ENCODE measurements at regions of chr14 and their contacts with region 1.

Region 1: DNA sequence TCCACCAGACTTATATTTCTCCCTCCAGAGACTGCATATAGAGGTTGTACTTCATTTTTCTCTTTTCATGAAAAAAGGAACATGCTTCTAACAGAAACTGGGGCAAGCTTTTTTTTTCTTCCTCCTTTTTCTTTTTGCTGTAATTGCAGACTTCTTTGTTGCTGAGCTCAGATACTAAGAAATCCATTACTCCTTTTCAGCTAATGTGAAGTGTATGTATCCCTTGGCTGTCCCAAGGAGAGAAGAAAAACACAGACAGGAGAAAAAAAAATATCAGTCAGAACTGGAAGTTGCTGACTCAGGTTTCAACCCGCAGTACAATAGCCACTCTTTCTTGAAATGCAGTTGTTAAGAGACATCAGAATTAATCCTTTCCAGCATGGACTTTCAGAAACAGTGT is 1248.4 kb downstream of the LRFN5 start:
- H3K4me3 Mint-ChIP-seq: peak overlapping the region; percentile 17
- H3K27ac Mint-ChIP-seq: peak overlapping the region; percentile 87
- H3K4me1 Mint-ChIP-seq: peaks cover 19% of the 10 kb centered on the region
- H3K27me3 Mint-ChIP-seq: no peaks in the 10 kb centered on the region

Region 2: DNA sequence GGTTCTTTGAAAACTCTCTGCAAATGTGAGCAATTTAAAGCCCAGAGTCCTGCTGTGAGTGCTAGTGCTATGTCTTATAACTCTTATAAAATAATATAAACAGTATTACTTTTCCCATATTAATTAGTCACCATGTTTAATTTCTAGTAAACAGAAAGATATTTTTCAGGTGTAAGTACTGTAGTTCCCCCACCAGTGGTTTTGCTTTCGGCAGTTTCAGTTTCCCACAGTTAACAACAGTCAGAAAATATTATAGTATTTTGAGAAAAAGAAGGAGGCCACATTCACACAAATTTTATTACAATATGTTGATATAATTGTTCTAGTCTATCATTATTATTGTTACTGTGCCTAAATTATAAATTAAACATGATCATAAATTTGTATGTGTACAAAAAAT is 447.9 kb before region 1 on chr14:
- intact Hi-C with region 1: no loop called
- H3K4me3 Mint-ChIP-seq: no peak overlapping the region
- H3K27ac Mint-ChIP-seq: no peak overlapping the region
- H3K4me1 Mint-ChIP-seq: no peaks in the 10 kb centered on the region
- H3K27me3 Mint-ChIP-seq: no peaks in the 10 kb centered on the region

Region 3: DNA sequence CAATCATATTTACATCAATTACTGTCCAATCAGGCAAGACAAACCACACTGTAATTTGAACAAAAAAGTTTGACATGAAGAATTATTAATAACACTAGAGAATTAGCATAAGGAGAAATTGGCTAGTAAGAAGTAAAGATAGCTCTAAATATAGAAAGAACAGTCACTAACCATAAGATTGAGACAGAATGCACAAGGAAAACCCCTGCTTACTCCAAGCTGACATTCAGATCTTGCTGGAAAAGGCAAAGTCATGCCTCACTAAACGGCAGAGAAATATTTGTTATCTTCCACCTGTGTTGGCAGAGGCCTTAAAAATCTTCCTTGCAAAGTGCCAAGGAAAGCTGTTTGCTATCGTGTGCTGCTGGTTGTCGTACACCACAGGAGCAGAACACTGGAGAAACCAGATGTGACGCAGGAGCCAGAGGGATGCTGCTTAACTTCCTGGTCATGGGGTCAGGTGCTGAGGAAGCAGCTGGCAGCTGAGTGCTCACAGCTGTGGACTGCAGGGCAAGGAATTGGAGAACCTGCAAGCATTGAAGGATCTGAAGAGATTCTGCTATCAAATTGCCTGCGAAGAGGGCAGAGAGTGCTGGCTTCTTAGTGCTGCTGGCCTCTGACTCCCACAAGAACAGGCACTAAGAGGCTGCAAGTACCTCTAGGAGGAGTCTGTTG is 74.9 kb after region 1 on chr14:
- intact Hi-C with region 1: loop called (anchors 10 kb)
- H3K4me3 Mint-ChIP-seq: peak overlapping the region; percentile 30
- H3K27ac Mint-ChIP-seq: peak overlapping the region; percentile 80
- H3K4me1 Mint-ChIP-seq: peaks cover 26% of the 10 kb centered on the region
- H3K27me3 Mint-ChIP-seq: no peaks in the 10 kb centered on the region

Region 4: DNA sequence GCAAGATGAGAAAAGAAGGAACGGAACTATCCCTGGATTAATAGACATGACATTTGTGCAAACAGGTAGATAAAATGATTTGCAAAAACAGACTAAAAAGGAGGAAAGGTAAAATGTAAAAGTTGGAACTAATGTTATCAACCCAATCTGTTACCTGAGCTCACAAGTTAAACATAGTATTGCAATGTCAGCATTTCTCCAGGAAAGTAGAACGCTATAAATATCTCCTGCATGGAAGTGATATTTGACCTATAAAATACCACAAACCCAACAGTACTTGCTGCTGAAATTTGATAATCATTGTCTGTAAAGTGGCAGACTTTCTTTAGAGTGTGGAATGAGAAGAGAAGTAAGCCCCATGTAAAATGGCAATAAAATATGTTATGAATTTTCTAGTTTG is 187.3 kb after region 1 on chr14:
- intact Hi-C with region 1: no loop called
- H3K4me3 Mint-ChIP-seq: no peak overlapping the region
- H3K27ac Mint-ChIP-seq: no peak overlapping the region
- H3K4me1 Mint-ChIP-seq: no peaks in the 10 kb centered on the region
- H3K27me3 Mint-ChIP-seq: no peaks in the 10 kb centered on the region

Measured in dendritic cell treated with granulocyte-macrophage colony-stimulating factor and Interleukin-4, amounts not matched to agents 40 ng/mL and 50 ng/mL, for 4 days (primary cell).